ENCODE measurements at regions of chr5 and their contacts with region 1.

Region 1: DNA sequence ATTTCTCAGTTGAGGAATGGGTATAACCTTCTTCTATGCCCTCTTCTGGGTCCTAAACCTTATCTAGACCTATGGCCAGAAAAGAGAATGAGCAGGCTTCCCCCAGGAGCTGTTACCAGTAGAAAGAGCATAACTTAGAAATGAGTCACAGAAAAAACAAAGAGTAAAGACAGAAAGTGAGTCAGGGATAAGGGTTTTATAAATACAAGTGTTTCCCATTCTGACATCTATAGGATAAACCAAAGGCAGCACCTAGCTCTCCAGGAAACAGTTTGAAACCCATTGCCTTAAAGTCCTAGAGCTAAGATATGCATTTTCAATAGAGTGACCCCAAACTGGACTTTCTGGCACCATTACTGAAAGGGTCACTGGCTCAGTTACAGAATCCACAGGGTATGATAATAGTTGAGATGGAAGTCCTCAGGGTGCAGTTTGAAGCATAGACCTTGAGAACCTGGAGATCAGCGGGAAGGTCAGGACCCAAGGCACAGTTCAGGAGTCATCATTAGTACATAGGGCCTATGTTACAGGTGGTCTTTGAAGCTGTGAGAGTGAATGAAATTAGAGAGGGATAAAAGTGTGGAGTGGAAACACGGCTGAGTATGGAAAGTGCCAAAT is 42.7 kb upstream of the LIFR start:
- DNase-seq: peak; percentile 58 to 75
- H3K4me3 ChIP-seq: no peak overlapping the region
- H3K4me3 Mint-ChIP-seq: peak overlapping the region; percentile 60
- H3K27ac Mint-ChIP-seq: peak overlapping the region; percentile 93
- H3K4me1 ChIP-seq: peaks cover 65% of the 10 kb centered on the region
- H3K4me1 Mint-ChIP-seq: peaks cover 58% of the 10 kb centered on the region
- H3K27me3 ChIP-seq: no peaks in the 10 kb centered on the region
- H3K27me3 Mint-ChIP-seq: no peaks in the 10 kb centered on the region
- CTCF ChIP-seq: no peak

Region 2: GRCh38 chr5:38551030-38552017 is 47.8 kb before region 1 on chr5:
- CTCF ChIA-PET with region 1: no interaction called
- POLR2A ChIA-PET with region 1: no interaction called
- intact Hi-C with region 1: loop called (anchors 5 kb)
- DNase-seq: peak in 1 of 2 experiments; percentile 23
- H3K4me3 ChIP-seq: no peak overlapping the region
- H3K4me3 Mint-ChIP-seq: no peak overlapping the region
- H3K27ac Mint-ChIP-seq: peak overlapping the region; percentile 25
- H3K4me1 ChIP-seq: peaks cover 40% of the 10 kb centered on the region
- H3K4me1 Mint-ChIP-seq: peaks cover 12% of the 10 kb centered on the region
- H3K27me3 ChIP-seq: no peaks in the 10 kb centered on the region
- H3K27me3 Mint-ChIP-seq: no peaks in the 10 kb centered on the region
- CTCF ChIP-seq: peak; percentile 32 to 53

Region 3: DNA sequence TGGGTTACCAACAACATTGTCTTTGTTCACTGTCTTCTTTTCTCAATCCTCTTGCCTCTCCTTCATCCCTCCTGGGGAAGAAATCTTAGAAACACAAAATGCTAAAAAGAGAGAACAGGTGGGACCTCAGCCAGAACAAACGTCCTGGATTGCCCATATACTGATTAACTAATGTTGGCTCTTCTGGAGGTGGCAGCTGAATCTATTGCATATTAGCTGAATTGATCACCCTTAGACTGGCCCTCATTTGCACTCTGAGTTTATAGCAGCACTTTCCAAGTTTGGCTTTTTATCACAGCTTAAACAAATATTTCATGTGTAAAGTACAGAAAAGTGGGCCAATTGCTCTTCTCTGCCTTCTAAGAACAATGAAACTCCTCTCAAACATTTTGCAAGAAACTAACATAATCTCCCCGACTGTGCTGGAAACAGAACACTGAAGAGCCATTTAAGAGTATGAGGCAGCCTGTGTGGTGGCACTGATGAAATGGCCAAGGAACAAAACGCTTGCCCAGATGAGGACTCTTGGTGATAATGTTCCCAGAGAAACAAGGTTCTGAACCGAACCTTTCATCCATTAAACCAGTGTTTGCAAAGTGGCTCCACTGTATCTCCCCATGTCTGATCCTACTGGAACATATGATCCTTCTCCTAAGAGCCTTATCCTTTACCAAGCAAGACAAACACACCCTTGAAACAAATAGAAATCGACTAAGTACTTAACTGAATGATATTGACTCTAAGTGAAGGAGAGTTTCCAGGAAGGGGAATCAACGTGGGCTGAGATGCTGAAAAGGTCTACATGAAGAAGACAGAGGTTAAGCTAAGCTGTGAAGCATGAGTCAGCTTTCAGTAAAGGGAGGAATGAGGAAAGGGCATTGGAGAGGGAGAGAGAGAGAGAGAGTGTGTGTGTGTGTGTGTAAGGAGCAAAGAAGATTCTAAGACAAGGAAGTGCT is 40.6 kb after region 1 on chr5:
- CTCF ChIA-PET with region 1: no interaction called
- POLR2A ChIA-PET with region 1: interaction called, 6 read pairs
- intact Hi-C with region 1: loop called (anchors 1 kb)
- DNase-seq: peak in 1 of 2 experiments; percentile 24
- H3K4me3 ChIP-seq: no peak overlapping the region
- H3K4me3 Mint-ChIP-seq: peak overlapping the region; percentile 1
- H3K27ac Mint-ChIP-seq: peak overlapping the region; percentile 67
- H3K4me1 ChIP-seq: peaks cover 70% of the 10 kb centered on the region
- H3K4me1 Mint-ChIP-seq: peaks cover 46% of the 10 kb centered on the region
- H3K27me3 ChIP-seq: no peaks in the 10 kb centered on the region
- H3K27me3 Mint-ChIP-seq: no peaks in the 10 kb centered on the region
- CTCF ChIP-seq: no peak

Region 4: DNA sequence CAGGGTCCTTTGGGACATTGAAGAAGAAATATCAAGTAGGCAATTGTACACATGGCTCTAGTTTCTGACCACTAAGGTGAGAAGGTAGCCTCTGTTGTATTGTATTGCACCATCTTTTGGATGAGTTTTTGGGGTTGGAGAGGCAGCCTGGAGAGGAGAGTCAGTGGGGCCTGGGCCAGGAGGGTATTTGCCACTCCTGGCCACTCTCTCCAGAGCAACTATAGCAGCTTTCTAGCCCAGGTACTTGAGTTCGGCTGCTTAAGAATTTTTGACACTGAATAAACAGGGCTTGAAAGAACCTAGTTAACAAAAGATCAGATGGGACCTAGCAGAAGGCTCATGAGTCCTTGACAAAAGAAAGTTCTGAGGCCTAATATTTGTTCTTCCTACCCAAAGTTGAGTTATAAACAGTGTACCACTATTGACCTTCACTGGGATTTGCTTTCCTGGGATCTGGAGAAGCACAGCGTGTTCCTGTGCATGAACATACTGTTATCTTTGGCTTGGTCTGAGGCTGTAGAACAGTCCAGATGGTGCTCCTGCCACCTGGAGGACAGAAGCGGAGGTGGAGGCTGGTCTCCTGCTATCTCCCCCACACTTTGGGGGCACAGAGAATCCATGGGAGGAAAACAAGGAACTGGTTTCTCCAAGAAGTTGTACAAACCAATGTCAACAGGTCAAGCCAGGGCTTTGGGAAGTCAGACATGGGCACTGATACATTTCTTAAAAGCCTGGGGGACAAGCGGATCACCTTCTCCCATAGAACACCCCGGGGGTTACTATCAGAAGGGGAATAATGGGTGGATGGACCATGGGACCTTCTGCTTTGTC is 67.8 kb after region 1 on chr5:
- CTCF ChIA-PET with region 1: no interaction called
- POLR2A ChIA-PET with region 1: no interaction called
- intact Hi-C with region 1: loop called (anchors 2 kb)
- DNase-seq: peak; percentile 52 to 56
- H3K4me3 ChIP-seq: no peak overlapping the region
- H3K4me3 Mint-ChIP-seq: no peak overlapping the region
- H3K27ac Mint-ChIP-seq: peak overlapping the region; percentile 13
- H3K4me1 ChIP-seq: peaks cover 58% of the 10 kb centered on the region
- H3K4me1 Mint-ChIP-seq: peaks cover 45% of the 10 kb centered on the region
- H3K27me3 ChIP-seq: no peaks in the 10 kb centered on the region
- H3K27me3 Mint-ChIP-seq: no peaks in the 10 kb centered on the region
- CTCF ChIP-seq: peak; percentile 60 to 73